CD4-positive, alpha-beta T cell (primary cell): ENCODE measurements at regions of chr19 and their contacts with region 1.

Region 1: GRCh38 chr19:53844849-53845246 is 20.7 kb upstream of the NLRP12 start:
- DNase-seq: peak in 3 of 14 experiments; percentile 19 to 62 (median 59)
- ATAC-seq: no peak
- H3K4me3 ChIP-seq: no peak overlapping the region
- H3K4me3 Mint-ChIP-seq: no peak overlapping the region
- H3K27ac ChIP-seq: no peak overlapping the region
- H3K27ac Mint-ChIP-seq: no peak overlapping the region
- H3K4me1 ChIP-seq: peaks cover 7% of the 10 kb centered on the region
- H3K4me1 Mint-ChIP-seq: peaks cover 6% of the 10 kb centered on the region
- H3K27me3 ChIP-seq: peaks cover 0 to 6% of the 10 kb centered on the region in 2 experiments
- H3K27me3 Mint-ChIP-seq: peaks cover 37% of the 10 kb centered on the region
- CTCF ChIP-seq: no peak

Region 2: GRCh38 chr19:53498581-53498980 is 346.3 kb before region 1 on chr19:
- CTCF ChIA-PET with region 1: no interaction called
- POLR2A ChIA-PET with region 1: no interaction called
- intact Hi-C with region 1: no loop called
- DNase-seq: no peak
- ATAC-seq: no peak
- H3K4me3 ChIP-seq: no peak overlapping the region
- H3K4me3 Mint-ChIP-seq: no peak overlapping the region
- H3K27ac ChIP-seq: no peak overlapping the region
- H3K27ac Mint-ChIP-seq: no peak overlapping the region
- H3K4me1 ChIP-seq: no peaks in the 10 kb centered on the region
- H3K4me1 Mint-ChIP-seq: no peaks in the 10 kb centered on the region
- H3K27me3 ChIP-seq: peaks cover 0 to 5% of the 10 kb centered on the region in 2 experiments
- H3K27me3 Mint-ChIP-seq: peaks cover 14% of the 10 kb centered on the region
- CTCF ChIP-seq: no peak

Region 3: DNA sequence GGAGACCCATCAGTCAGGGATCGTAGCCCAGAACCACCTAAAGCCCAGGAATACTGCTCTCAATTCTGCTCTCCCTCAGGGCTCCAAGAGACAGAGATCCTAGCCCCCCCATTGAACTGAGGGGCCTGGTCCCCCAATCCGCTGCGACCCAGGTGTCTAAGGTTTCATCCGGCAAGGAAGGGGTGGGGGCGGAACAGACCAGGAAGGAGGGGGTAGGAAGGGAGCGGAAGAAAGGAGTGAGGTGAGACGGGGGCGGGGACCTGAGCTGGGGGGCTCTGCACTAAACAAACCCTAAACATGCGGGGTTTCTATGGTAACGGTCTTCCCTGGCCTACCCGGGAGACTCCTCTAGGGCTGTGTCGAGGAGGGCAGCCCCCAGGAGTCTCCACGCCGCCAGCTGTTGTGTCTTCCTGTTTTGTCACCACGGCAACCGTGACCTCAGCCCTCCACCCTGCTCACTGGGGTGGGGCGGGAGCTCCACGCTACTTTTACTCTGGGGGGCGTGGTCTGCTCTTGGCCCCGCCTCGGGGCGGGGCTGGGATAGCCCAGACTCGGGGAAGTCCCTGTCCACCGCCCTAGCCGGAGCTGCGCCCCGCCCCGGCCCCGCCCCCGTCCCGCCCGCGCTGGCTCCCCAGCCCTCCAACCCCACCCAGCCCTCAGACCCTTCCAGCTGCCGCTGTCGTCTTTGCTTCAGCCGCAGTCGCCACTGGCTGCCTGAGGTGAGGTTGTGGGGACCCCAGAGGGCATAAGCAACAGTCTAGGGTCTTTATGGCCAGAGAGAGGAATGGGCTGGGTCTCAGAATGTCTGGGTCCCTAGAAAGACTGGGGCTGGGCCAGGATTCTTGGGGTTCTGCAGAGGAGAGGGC is 22.6 kb after region 1 on chr19 and contains the start of gene MYADM:
- CTCF ChIA-PET with region 1: no interaction called
- POLR2A ChIA-PET with region 1: no interaction called
- intact Hi-C with region 1: no loop called
- DNase-seq: peak; percentile 99 to 100 (median 100)
- ATAC-seq: peak; percentile 75
- H3K4me3 ChIP-seq: peak within 1 kb of the TSS; percentile 100
- H3K4me3 Mint-ChIP-seq: peak within 1 kb of the TSS; percentile 99
- H3K27ac ChIP-seq: peak within 1 kb of the TSS; percentile 97 to 100
- H3K27ac Mint-ChIP-seq: peak within 1 kb of the TSS; percentile 99
- H3K4me1 ChIP-seq: peaks cover 59% of the 10 kb centered on the region
- H3K4me1 Mint-ChIP-seq: peaks cover 46% of the 10 kb centered on the region
- H3K27me3 ChIP-seq: no peaks in the 10 kb centered on the region
- H3K27me3 Mint-ChIP-seq: no peaks in the 10 kb centered on the region
- CTCF ChIP-seq: no peak
- total RNA-seq, gene MYADM: 444 to 448 TPM

Region 4: DNA sequence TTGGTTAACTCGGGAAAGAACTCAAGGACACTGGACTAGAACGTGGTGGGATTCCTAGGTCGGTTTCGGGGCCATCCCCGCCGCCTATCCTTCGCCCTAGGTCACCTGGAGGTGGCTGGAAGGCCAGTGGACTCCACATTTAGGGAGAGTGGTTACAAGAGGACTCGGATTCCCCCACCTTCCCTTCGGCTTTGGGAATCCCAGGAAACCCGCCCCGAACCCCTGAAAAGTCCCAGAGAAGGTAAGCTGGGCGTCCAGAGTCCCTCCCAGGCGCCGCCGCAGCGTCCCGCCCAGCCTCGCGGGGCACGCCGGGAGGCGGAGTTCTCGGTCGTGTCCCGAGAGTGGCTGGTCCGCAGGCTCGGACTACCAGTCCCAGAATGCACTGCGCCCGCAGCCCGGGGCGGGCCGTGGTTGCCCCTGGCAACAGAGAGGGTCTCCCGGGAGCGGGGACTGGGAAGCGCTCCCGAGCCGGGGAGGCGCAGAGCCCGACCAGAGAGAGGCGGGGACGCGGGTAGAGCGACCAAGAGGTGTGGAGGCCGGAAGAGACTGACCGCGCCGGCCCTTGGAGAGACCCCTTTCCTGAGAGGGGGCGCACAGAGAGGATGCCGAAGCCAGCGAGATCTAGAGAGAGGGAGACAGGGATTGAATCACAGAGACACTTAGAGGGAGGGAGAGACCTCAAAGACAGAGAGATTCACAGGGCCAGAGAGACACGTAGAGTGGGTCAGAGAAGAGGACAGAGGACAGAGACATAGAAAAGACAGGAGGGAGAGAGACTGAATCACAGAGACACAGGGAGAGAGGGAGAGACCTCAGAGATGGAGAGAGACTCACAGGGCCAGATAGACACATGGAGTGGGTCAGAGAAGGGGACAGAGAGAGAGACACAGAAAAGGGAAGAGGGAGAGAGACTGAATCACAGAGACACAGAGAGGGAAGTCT is 34.6 kb after region 1 on chr19:
- CTCF ChIA-PET with region 1: interaction called, 4 read pairs
- POLR2A ChIA-PET with region 1: interaction called, 3 read pairs
- intact Hi-C with region 1: loop called (anchors 1 kb)
- DNase-seq: peak; percentile 66 to 90 (median 75)
- ATAC-seq: peak; percentile 78
- H3K4me3 ChIP-seq: peak overlapping the region; percentile 58
- H3K4me3 Mint-ChIP-seq: no peak overlapping the region
- H3K27ac ChIP-seq: no peak overlapping the region
- H3K27ac Mint-ChIP-seq: peak overlapping the region; percentile 51
- H3K4me1 ChIP-seq: peaks cover 81% of the 10 kb centered on the region
- H3K4me1 Mint-ChIP-seq: peaks cover 48% of the 10 kb centered on the region
- H3K27me3 ChIP-seq: peaks cover 44 to 48% of the 10 kb centered on the region in 2 experiments
- H3K27me3 Mint-ChIP-seq: peaks cover 28% of the 10 kb centered on the region
- CTCF ChIP-seq: no peak

Region 5: GRCh38 chr19:53991224-53992113 is 146.6 kb after region 1 on chr19 and contains the start of gene CACNG6:
- CTCF ChIA-PET with region 1: no interaction called
- POLR2A ChIA-PET with region 1: no interaction called
- intact Hi-C with region 1: no loop called
- DNase-seq: peak in 1 of 14 experiments; percentile 20
- ATAC-seq: no peak
- H3K4me3 ChIP-seq: no peak within 1 kb of the TSS
- H3K4me3 Mint-ChIP-seq: no peak within 1 kb of the TSS
- H3K27ac ChIP-seq: no peak within 1 kb of the TSS
- H3K27ac Mint-ChIP-seq: no peak within 1 kb of the TSS
- H3K4me1 ChIP-seq: peaks cover 9% of the 10 kb centered on the region
- H3K4me1 Mint-ChIP-seq: peaks cover 4% of the 10 kb centered on the region
- H3K27me3 ChIP-seq: peaks cover 33 to 48% of the 10 kb centered on the region in 2 experiments
- H3K27me3 Mint-ChIP-seq: peaks cover 52% of the 10 kb centered on the region
- CTCF ChIP-seq: no peak
- total RNA-seq, gene CACNG6: not detected